Mammary epithelial cell (primary cell): ENCODE measurements at regions of chr4 and their contacts with region 1.

Region 1: GRCh38 chr4:73653695-73654106 is 33.5 kb upstream of the RASSF6 start:
- DNase-seq: peak; percentile 60
- H3K4me3 ChIP-seq: no peak overlapping the region
- H3K27ac ChIP-seq: no peak overlapping the region
- H3K4me1 ChIP-seq: peaks cover 25% of the 10 kb centered on the region
- H3K27me3 ChIP-seq: no peaks in the 10 kb centered on the region
- CTCF ChIP-seq: peak; percentile 25 to 63

Region 2: DNA sequence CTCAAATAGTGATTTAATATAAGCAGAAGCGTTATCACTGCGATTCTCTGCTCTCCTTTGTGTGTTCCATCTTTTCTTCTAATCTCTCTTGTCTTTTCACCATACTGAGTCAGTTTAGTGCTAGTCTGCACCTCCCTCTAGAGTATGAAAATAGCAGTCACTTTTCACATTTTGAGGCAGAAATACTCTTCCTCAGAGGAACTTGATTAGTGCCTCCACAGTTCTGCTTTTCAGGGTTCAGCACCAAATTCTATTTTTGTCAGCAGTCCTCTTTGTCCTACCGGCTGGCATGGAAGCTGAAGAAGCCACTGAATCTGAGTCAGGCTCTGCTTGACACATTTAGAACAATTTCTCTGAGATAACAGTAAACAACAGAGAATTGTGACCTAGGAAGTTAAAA is 345.4 kb before region 1 on chr4:
- CTCF ChIA-PET with region 1: no interaction called
- dilution Hi-C with region 1: no loop called
- in situ Hi-C with region 1: no loop called
- intact Hi-C with region 1: loop called (anchors 10 kb)
- DNase-seq: peak; percentile 15
- H3K4me3 ChIP-seq: no peak overlapping the region
- H3K27ac ChIP-seq: no peak overlapping the region
- H3K4me1 ChIP-seq: no peaks in the 10 kb centered on the region
- H3K27me3 ChIP-seq: no peaks in the 10 kb centered on the region
- CTCF ChIP-seq: peak; percentile 33 to 40

Region 3: DNA sequence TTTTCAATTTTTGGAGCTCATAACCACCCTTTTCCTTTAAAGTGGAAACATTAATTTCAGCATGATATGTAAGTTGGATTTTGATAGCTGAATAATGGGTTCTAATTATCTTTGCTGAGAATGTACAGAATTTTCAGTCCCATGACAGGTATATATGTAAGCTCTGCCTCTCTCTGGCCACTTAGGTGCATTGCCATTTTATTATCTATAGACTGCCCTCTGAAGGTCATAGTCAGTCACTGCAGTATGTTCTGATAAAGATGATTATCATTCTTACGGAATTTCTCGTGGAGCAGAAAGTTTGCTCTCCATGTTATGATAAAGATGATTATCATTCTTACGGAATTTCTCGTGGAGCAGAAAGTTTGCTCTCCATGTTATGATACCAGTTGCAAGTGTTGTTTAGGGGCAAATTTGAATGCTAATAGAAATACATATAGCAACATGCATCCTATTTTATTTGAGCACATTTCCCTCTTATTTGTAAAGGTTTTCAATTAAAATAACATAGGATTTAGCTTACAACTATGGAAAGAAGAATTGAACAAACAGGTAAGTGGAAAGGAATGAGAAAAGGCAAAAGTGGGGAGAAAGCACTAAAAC is 207.3 kb before region 1 on chr4:
- CTCF ChIA-PET with region 1: interaction called, 3 read pairs
- dilution Hi-C with region 1: no loop called
- in situ Hi-C with region 1: no loop called
- intact Hi-C with region 1: loop called (anchors 2 kb)
- DNase-seq: peak; percentile 43
- H3K4me3 ChIP-seq: no peak overlapping the region
- H3K27ac ChIP-seq: no peak overlapping the region
- H3K4me1 ChIP-seq: peaks cover 7% of the 10 kb centered on the region
- H3K27me3 ChIP-seq: peaks cover 2% of the 10 kb centered on the region
- CTCF ChIP-seq: peak; percentile 84 to 94

Region 4: DNA sequence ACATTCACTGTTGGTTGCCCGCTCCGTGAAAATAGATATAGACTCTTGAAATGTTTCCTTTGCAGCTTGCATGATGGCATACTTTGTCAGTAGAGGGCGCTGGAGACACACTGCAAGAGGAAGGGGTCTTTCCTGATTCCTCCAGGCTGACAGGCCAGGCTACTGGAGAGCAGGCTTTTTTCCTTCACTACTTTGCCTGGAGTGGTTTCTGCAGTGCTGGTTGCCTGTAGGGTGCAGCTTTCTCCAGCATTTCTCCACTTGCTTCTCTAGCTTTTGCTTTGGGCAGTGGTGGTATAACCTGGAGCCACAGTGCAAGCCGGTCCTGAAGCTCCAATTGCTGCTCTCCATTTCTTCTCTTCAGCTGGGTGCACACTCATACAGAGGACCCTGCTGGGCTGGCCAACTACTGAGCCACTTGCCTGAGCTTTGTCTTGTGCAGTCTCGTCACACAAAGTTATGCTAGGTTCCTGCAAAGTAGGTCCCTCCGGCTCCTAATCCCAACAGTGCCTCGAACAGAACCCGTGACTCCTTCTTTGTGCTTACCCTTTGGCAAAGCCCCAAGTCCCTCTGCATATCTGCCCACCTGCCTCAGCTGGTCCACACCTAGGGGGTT is 79.8 kb before region 1 on chr4:
- CTCF ChIA-PET with region 1: interaction called, 7 read pairs
- dilution Hi-C with region 1: no loop called
- in situ Hi-C with region 1: no loop called
- intact Hi-C with region 1: loop called (anchors 1 kb)
- DNase-seq: peak; percentile 52
- H3K4me3 ChIP-seq: no peak overlapping the region
- H3K27ac ChIP-seq: no peak overlapping the region
- H3K4me1 ChIP-seq: peaks cover 5% of the 10 kb centered on the region
- H3K27me3 ChIP-seq: no peaks in the 10 kb centered on the region
- CTCF ChIP-seq: peak; percentile 89

Region 5: GRCh38 chr4:73598916-73599581 is 54.7 kb before region 1 on chr4:
- CTCF ChIA-PET with region 1: no interaction called
- dilution Hi-C with region 1: loop called (anchors 5 kb)
- in situ Hi-C with region 1: loop called (anchors 5 to 10 kb)
- intact Hi-C with region 1: no loop called
- DNase-seq: peak; percentile 96
- H3K4me3 ChIP-seq: peak overlapping the region in 1 of 3 experiments; percentile 4
- H3K27ac ChIP-seq: peak overlapping the region; percentile 63
- H3K4me1 ChIP-seq: peaks cover 22% of the 10 kb centered on the region
- H3K27me3 ChIP-seq: no peaks in the 10 kb centered on the region
- CTCF ChIP-seq: no peak

Region 6: DNA sequence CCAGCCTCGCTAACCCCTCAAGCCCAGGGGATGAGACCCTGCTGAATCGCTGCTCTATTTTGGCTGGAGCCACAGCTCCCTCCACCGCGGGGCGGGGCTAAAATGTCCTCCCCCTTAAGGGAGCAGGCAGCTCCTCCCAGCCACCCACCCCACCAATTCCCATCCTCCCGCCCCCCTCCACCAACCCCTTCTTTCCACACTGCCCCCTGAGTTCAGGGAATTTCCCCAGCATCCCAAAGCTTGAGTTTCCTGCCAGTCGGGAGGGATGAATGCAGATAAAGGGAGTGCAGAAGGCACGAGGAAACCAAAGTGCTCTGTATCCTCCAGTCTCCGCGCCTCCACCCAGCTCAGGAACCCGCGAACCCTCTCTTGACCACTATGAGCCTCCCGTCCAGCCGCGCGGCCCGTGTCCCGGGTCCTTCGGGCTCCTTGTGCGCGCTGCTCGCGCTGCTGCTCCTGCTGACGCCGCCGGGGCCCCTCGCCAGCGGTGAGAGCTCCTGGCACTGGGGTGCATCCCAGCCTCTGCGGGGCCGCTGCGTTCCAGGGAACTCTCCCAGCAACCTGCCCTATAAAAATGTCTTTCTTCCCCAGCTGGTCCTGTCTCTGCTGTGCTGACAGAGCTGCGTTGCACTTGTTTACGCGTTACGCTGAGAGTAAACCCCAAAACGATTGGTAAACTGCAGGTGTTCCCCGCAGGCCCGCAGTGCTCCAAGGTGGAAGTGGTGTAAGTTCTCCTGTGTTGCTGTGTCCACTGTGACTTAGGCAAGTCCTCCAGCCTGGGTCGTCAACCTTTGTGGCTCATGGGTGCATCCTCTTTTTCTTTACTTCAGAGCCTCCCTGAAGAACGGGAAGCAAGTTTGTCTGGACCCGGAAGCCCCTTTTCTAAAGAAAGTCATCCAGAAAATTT is 182.9 kb after region 1 on chr4 and contains the start of gene CXCL6:
- CTCF ChIA-PET with region 1: no interaction called
- dilution Hi-C with region 1: loop called (anchors 25 kb)
- in situ Hi-C with region 1: no loop called
- intact Hi-C with region 1: no loop called
- DNase-seq: no peak
- H3K4me3 ChIP-seq: no peak within 1 kb of the TSS
- H3K27ac ChIP-seq: no peak within 1 kb of the TSS
- H3K4me1 ChIP-seq: peaks cover 20% of the 10 kb centered on the region
- H3K27me3 ChIP-seq: no peaks in the 10 kb centered on the region
- CTCF ChIP-seq: no peak
- total RNA-seq, gene CXCL6: 0.17 TPM in 1 of 2 donors, not detected in the other